ENCODE measurements at regions of chr5 and their contacts with region 1.

Region 1: DNA sequence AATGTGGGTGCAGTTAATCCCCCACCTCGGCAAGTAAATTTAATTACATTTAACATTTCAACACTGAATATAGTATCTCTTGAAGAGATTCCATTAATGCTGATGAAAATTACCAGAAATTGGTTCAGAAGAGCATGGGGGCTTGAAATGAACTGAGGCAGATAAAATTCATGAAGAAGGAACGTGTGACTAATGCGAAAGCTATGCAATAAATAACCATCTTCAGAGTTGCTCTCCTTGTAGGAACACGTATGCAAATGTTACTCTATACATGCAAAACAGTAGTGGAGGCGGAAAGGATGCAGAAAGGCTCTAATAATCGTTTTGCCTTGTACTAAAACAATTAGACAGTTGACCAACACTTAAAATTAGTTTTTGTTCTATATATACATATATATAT is 320.2 kb downstream of the CTNND2 start:
- DNase-seq: peak; percentile 45
- H3K4me3 ChIP-seq: no peak overlapping the region
- CTCF ChIP-seq: no peak

Region 2: GRCh38 chr5:11504892-11505545 is 79.0 kb before region 1 on chr5:
- in situ Hi-C with region 1: loop called (anchors 5 kb)
- DNase-seq: no peak
- H3K4me3 ChIP-seq: no peak overlapping the region
- CTCF ChIP-seq: no peak

Region 3: DNA sequence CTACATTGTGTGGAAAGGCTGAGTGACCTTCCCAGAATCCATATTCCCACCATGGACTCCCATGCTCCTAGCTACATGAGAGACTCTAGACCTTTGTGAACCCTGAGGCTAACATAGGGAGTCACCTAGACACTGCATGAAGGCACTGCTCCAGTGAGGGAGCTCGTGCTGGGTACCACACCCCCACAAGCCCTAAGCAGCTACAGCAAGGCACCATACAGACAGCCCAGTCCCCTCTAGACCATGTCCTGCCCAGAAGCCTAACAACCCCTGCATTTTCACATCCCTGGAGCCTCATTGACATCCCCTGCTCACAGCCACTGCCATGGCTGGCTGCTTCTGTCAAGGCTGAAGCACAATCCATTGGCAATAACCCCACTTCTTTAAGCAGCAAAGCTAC is 496.7 kb after region 1 on chr5:
- in situ Hi-C with region 1: no loop called
- DNase-seq: no peak
- H3K4me3 ChIP-seq: no peak overlapping the region
- CTCF ChIP-seq: no peak